ENCODE measurements at regions of chr3 and their contacts with region 1.

Region 1: DNA sequence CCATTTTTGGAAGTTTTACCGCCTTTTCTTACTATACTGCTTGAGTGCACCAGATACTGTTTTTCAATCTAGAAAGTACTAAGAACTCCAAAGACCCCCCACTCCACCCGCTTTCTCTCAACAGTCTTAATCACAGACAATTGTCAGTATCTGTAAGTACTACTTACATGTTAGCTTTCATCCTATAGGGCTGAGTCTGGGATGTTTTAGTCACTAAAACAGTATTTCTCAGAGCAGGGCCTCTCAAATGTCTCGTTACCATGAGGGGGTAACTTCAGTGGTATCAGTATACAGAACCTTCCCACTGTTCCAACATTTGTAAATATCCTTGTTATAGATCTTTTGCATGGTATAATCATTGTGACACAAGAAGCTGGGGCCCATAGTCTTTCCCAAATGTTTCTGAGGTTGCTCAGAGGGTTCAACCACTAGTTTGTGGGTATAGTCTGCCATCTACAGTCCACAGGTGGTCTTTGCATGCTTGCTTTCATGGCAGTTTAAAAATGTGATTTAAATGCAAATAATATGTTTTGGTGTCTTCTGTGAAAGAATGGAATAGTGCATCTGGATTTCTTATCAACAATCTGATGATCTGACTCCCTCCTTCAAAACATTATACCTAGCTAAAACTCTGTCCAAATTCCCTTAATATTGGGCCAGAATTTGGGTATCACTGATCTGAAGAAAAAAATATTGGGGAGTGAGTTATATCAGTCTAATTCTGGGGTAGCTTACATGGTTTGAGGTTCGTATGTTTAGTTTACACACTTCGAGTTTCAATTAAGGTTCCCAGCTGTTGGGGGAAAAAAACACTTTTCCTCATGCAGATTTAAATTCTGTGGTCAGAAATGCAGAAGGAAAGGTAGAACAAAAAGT is 18.0 kb upstream of the DNAJC13 start:
- DNase-seq: peak; percentile 35 to 52 (median 43)
- ATAC-seq: peak; percentile 74
- H3K4me3 ChIP-seq: no peak overlapping the region
- H3K27ac ChIP-seq: no peak overlapping the region
- H3K4me1 ChIP-seq: peaks cover 0 to 2% of the 10 kb centered on the region in 2 experiments; a peak in 1 of 5 replicates
- H3K27me3 ChIP-seq: peaks cover 0 to 7% of the 10 kb centered on the region in 2 experiments; a peak in 1 of 5 replicates
- CTCF ChIP-seq: peak; percentile 64 to 84 (median 66)
- EP300 ChIP-seq: no peak
- POLR2A ChIP-seq: no peak
- RAD21 ChIP-seq: peak; percentile 82 to 85

Region 2: DNA sequence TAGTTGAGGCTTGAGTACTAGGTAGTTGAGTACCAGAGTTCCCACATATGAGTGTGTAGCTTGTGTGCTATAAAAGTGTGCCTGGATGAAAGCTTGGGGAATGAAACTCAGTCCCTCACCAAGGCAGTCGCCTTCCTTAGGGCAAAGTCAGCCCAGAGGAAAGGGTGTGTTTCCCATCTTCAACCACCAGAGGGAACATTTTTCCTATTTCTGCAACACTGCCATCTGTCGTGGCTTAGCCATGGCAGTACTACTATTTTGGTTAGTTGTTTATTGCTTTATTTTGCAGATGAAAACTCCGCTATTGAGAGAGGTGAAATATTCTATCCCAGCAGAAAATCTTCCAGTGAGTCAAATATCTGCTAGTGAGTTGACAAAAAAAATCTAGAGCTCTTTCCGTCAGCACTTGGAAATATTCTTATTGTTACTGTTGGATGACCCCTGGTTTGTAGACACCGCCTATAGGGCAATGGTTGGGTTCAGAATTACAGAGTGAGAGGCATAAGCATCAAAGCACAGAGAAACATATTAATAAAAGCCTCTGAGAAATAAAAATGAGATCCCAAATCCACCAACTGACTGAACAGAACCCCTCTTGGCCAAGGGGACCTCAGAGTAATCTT is 604.4 kb before region 1 on chr3:
- CTCF ChIA-PET with region 1: no interaction called
- POLR2A ChIA-PET with region 1: no interaction called
- in situ Hi-C with region 1: loop called (anchors 25 kb)
- intact Hi-C with region 1: loop called (anchors 10 kb)
- DNase-seq: peak; percentile 30 to 48 (median 44)
- ATAC-seq: peak; percentile 95
- H3K4me3 ChIP-seq: no peak overlapping the region
- H3K27ac ChIP-seq: no peak overlapping the region
- H3K4me1 ChIP-seq: peaks cover 0 to 8% of the 10 kb centered on the region in 2 experiments; a peak in 2 of 5 replicates
- H3K27me3 ChIP-seq: no peaks in the 10 kb centered on the region
- CTCF ChIP-seq: peak; percentile 68 to 98 (median 89)
- EP300 ChIP-seq: no peak
- POLR2A ChIP-seq: no peak
- RAD21 ChIP-seq: peak; percentile 52 to 70

Region 3: DNA sequence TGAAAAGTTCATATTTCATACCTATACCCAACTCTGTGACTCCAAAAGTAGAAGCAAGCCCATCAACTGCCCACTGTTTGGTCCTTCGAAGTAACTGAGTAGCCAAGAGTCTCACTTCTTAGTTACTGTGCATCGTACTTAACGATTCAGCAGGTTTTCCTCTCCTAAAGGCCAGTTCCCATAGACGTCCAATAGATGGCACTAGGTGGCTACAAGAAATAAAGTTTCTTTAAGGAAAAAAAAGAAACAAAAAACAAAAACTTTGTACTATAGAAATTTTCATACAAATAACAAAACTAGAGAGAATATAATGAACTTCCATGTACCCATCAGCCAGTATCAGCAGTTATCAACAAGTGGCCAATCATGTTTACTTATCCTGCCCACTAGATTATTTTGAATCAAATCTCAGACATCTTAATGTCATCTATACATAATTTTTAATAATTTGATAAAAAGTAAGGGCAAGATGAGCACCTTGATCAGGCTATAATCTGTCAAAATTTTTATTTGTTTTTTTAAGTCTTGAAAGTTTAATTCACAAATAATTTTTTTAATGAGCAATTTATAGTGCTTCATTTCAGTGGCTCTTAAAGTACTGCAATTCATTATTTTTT is 145.9 kb before region 1 on chr3:
- CTCF ChIA-PET with region 1: interaction called, 11 read pairs
- POLR2A ChIA-PET with region 1: no interaction called
- in situ Hi-C with region 1: no loop called
- intact Hi-C with region 1: loop called (anchors 2 kb)
- DNase-seq: peak in 3 of 4 experiments; percentile 11 to 54 (median 32)
- ATAC-seq: peak; percentile 67; the same call in 2 of the 3 replicates
- H3K4me3 ChIP-seq: no peak overlapping the region
- H3K27ac ChIP-seq: no peak overlapping the region
- H3K4me1 ChIP-seq: no peaks in the 10 kb centered on the region
- H3K27me3 ChIP-seq: no peaks in the 10 kb centered on the region
- CTCF ChIP-seq: peak; percentile 50 to 67 (median 51); a peak in 5 of 6 replicates
- EP300 ChIP-seq: no peak
- POLR2A ChIP-seq: no peak
- RAD21 ChIP-seq: peak; percentile 50 to 56

Region 4: GRCh38 chr3:132343018-132343612 is 56.2 kb before region 1 on chr3:
- CTCF ChIA-PET with region 1: no interaction called
- POLR2A ChIA-PET with region 1: no interaction called
- in situ Hi-C with region 1: loop called (anchors 5 kb)
- intact Hi-C with region 1: no loop called
- DNase-seq: peak; percentile 16 to 55 (median 24)
- ATAC-seq: peak; percentile 72
- H3K4me3 ChIP-seq: no peak overlapping the region
- H3K27ac ChIP-seq: no peak overlapping the region
- H3K4me1 ChIP-seq: no peaks in the 10 kb centered on the region
- H3K27me3 ChIP-seq: no peaks in the 10 kb centered on the region; a peak in 1 of 5 replicates
- CTCF ChIP-seq: peak; percentile 54 to 73 (median 58)
- EP300 ChIP-seq: no peak
- POLR2A ChIP-seq: no peak
- RAD21 ChIP-seq: peak; percentile 64 to 70

Region 5: DNA sequence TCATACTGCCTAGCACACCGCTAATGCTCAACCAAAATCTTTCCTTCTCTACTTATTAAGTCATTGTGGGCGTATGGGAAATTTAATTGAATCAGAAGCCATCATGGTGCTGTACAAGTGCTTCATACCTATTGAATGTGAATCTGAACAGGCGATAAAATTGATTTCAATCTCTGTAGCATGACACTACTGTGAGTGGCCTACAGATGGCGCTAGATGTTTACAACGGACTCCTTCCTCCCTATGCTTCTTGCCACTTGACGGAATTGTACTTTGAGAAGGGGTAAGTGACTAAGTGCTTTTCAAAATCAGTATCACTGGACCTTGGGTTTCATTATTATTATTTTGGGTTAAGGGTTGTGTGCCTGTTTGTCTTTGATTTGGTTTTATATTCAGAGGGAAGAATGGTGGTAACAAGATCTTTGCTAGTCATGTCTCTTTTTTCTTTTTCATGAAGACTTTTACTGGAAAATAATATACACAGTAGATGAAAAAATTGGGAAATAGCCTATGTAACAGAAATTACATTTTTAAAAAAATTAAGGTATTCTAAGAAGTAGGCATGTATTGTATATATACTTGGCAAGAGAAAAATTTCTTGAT is 46.6 kb before region 1 on chr3:
- CTCF ChIA-PET with region 1: interaction called, 28 read pairs
- POLR2A ChIA-PET with region 1: no interaction called
- in situ Hi-C with region 1: loop called (anchors 5 kb)
- intact Hi-C with region 1: loop called (anchors 1 kb)
- DNase-seq: peak; percentile 62 to 65 (median 64)
- ATAC-seq: peak; percentile 79
- H3K4me3 ChIP-seq: no peak overlapping the region
- H3K27ac ChIP-seq: no peak overlapping the region
- H3K4me1 ChIP-seq: no peaks in the 10 kb centered on the region
- H3K27me3 ChIP-seq: peaks cover 0 to 5% of the 10 kb centered on the region in 2 experiments; a peak in 1 of 5 replicates
- CTCF ChIP-seq: peak; percentile 68 to 77 (median 75)
- EP300 ChIP-seq: no peak
- POLR2A ChIP-seq: no peak
- RAD21 ChIP-seq: peak; percentile 78 to 83

Measured in K562 (cell line).